Heart right ventricle (tissue), 16 donors: ENCODE measurements at regions of chr4 and their contacts with region 1.

Region 1: DNA sequence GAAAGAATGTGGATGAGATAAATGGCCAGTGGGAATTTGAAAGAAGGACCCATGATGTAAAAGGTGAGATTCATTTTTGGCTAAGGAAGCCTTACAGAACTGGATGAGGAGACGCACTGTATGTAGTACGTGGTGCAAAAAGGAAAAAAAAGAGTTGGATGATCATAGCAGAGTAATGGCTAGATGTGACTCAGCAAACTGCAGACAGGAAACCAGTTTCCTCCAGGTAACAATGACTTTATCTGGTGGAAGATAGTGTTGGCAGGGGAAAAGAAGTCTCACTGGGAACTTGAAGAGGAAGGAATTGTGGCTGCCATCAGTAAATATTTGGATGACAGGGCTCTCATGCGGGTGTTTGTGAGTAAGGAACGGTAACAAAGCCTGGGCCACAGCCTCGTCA is 243.2 kb downstream of the CPE start:
- DNase-seq: no peak
- ATAC-seq: peak in 4 of 8 donors; percentile 42 to 69 (median 56)
- H3K4me3 ChIP-seq: no peak overlapping the region
- H3K27ac ChIP-seq: no peak overlapping the region
- H3K4me1 ChIP-seq: peaks cover 0 to 13% (median 0%) of the 10 kb centered on the region in 9 donors
- H3K27me3 ChIP-seq: no peaks in the 10 kb centered on the region
- CTCF ChIP-seq: no peak

Region 2: DNA sequence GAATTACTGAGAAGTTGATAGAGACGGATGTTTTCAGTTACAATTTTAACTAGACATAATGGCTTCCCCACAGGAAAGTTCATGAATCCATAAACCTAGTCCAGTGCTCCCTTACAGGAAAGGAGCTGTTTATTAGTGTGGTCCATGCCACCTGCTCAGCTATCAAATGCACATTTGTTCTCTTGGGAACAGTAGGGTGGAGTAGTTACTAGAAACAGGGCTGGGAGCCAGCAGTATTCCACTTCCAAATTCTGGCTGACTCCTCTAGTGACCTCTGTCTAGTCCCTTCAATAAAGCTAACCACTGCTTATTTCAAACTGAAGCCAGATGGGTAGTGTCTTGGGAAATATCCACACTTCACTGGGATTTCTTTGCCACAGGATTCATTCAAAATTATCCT is 162.7 kb after region 1 on chr4:
- intact Hi-C with region 1: loop called in 1 of 10 experiments (anchors 10 kb)
- DNase-seq: peak in 1 of 2 donors; percentile 80
- ATAC-seq: peak; percentile 75 to 98 (median 94)
- H3K4me3 ChIP-seq: no peak overlapping the region
- H3K27ac ChIP-seq: peak overlapping the region in 3 of 10 donors; percentile 5 to 59 (median 46)
- H3K4me1 ChIP-seq: peaks cover 0 to 38% (median 27%) of the 10 kb centered on the region in 9 donors
- H3K27me3 ChIP-seq: no peaks in the 10 kb centered on the region
- CTCF ChIP-seq: no peak

Region 3: GRCh38 chr4:166045457-166045856 is 423.5 kb after region 1 on chr4:
- intact Hi-C with region 1: loop called in 1 of 10 experiments (anchors 10 kb)
- DNase-seq: no peak
- ATAC-seq: no peak
- H3K4me3 ChIP-seq: no peak overlapping the region
- H3K27ac ChIP-seq: no peak overlapping the region
- H3K4me1 ChIP-seq: peaks cover 0 to 3% (median 0%) of the 10 kb centered on the region in 9 donors
- H3K27me3 ChIP-seq: no peaks in the 10 kb centered on the region
- CTCF ChIP-seq: no peak